ENCODE measurements at regions of chr16 and their contacts with region 1.

Region 1: DNA sequence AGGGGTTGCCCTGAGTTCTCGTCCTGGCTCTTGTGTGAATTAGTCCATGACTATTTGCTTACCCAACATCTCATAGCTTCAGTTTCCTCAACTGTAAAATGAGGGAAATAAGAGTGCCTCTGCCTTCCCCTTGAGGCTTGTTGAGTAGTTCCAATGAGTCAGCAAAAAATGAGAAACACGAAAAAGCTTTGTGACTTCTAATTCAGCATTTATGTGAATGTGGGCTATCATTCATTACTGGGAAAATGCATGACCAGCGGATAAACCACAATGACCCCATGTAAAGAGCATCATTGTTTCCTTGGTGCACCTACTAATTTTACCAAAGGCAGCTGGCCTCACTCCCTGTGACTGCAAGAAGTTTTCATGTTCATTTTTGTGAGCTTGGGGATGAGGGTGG is 374.6 kb upstream of the HSBP1 start:
- DNase-seq: no peak
- H3K4me3 ChIP-seq: no peak overlapping the region
- CTCF ChIP-seq: no peak

Region 2: DNA sequence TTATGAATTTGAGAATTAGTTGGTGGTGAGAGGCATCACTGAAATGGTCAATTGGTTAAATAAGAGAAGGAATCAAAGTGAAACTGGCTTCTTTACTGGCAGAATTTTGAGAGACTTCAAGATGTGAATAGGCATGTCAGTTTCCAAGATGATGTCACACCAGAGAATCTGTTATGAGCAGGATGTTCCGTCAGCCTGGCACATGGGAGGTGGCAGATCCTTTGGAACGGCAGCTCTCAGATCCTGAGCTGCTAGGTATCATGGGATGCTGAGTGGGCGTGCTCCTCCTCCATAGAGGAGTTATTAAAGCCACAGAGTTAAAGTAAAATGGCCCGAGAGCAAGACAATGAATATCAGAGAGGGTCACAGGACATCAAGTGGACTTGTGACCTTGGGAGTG is 69.7 kb before region 1 on chr16:
- in situ Hi-C with region 1: loop called (anchors 5 kb)
- DNase-seq: no peak
- H3K4me3 ChIP-seq: no peak overlapping the region
- CTCF ChIP-seq: no peak

Region 3: GRCh38 chr16:83520596-83520995 is 87.4 kb after region 1 on chr16:
- in situ Hi-C with region 1: no loop called
- DNase-seq: no peak
- H3K4me3 ChIP-seq: no peak overlapping the region
- CTCF ChIP-seq: no peak

Measured in astrocyte of the cerebellum (primary cell).